Caco-2 (cell line): ENCODE measurements at regions of chr10 and their contacts with region 1.

Region 1: DNA sequence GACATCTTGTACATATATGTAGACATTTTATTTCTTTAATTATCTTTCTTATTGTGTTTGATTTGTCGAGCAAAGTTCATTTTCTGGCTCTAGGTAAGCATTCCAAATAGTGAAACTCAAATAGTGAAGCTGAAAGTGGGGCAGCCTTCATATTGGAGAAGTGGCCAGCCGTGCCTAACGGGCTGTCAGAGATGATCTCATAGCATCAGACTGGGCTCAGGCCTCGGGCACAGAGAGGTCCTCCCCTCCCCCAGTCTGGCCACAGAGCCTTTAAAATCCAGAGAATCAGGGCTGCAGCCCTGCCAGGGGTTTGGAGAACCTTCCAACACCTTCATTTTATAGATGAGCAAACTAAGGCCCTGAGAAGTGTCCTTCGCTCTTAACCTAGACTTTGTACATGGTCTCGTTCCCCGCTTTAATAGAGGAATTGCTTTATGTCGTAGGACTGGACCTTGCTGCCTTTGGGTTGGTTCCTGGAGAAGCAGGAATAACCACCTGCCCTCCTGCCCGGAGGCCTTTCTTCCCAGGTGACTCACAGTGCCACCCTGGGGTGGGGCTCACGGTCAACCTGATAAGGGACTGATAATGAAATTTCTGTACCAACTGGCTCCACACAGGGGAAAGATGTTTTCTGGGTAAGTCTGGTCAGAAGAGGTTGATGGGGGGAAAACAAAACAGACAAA is 7.3 kb downstream of the TSPAN15 start:
- DNase-seq: peak; percentile 78 to 87
- H3K4me3 ChIP-seq: no peak overlapping the region
- H3K4me3 Mint-ChIP-seq: peak overlapping the region; percentile 8
- H3K27ac Mint-ChIP-seq: peak overlapping the region; percentile 52
- H3K4me1 ChIP-seq: peaks cover 36% of the 10 kb centered on the region
- H3K4me1 Mint-ChIP-seq: peaks cover 39% of the 10 kb centered on the region
- H3K27me3 ChIP-seq: no peaks in the 10 kb centered on the region
- H3K27me3 Mint-ChIP-seq: no peaks in the 10 kb centered on the region
- CTCF ChIP-seq: no peak

Region 2: GRCh38 chr10:69425511-69426298 is 32.9 kb before region 1 on chr10:
- CTCF ChIA-PET with region 1: no interaction called
- POLR2A ChIA-PET with region 1: no interaction called
- intact Hi-C with region 1: no loop called
- DNase-seq: peak; percentile 88 to 89
- H3K4me3 ChIP-seq: no peak overlapping the region
- H3K4me3 Mint-ChIP-seq: peak overlapping the region; percentile 47
- H3K27ac Mint-ChIP-seq: peak overlapping the region; percentile 84
- H3K4me1 ChIP-seq: peaks cover 24% of the 10 kb centered on the region
- H3K4me1 Mint-ChIP-seq: peaks cover 26% of the 10 kb centered on the region
- H3K27me3 ChIP-seq: no peaks in the 10 kb centered on the region
- H3K27me3 Mint-ChIP-seq: no peaks in the 10 kb centered on the region
- CTCF ChIP-seq: no peak

Region 3: GRCh38 chr10:69483963-69484362 is 25.4 kb after region 1 on chr10:
- CTCF ChIA-PET with region 1: no interaction called
- POLR2A ChIA-PET with region 1: no interaction called
- intact Hi-C with region 1: loop called (anchors 2 kb)
- DNase-seq: no peak
- H3K4me3 ChIP-seq: no peak overlapping the region
- H3K4me3 Mint-ChIP-seq: no peak overlapping the region
- H3K27ac Mint-ChIP-seq: no peak overlapping the region
- H3K4me1 ChIP-seq: no peaks in the 10 kb centered on the region
- H3K4me1 Mint-ChIP-seq: no peaks in the 10 kb centered on the region
- H3K27me3 ChIP-seq: no peaks in the 10 kb centered on the region
- H3K27me3 Mint-ChIP-seq: no peaks in the 10 kb centered on the region
- CTCF ChIP-seq: no peak

Region 4: GRCh38 chr10:69573056-69573806 is 114.7 kb after region 1 on chr10 and contains the start of gene NEUROG3:
- CTCF ChIA-PET with region 1: no interaction called
- POLR2A ChIA-PET with region 1: no interaction called
- intact Hi-C with region 1: no loop called
- DNase-seq: peak in 1 of 2 experiments; percentile 61
- H3K4me3 ChIP-seq: peak within 1 kb of the TSS; percentile 10; the same call in 1 of the 2 replicates
- H3K4me3 Mint-ChIP-seq: peak within 1 kb of the TSS; percentile 53
- H3K27ac Mint-ChIP-seq: no peak within 1 kb of the TSS
- H3K4me1 ChIP-seq: peaks cover 12% of the 10 kb centered on the region
- H3K4me1 Mint-ChIP-seq: peaks cover 7% of the 10 kb centered on the region
- H3K27me3 ChIP-seq: peaks cover 25% of the 10 kb centered on the region
- H3K27me3 Mint-ChIP-seq: peaks cover 55% of the 10 kb centered on the region
- CTCF ChIP-seq: no peak
- total RNA-seq, gene NEUROG3: not detected in 2 replicates